Left cardiac atrium (tissue), 4 donors: ENCODE measurements at regions of chr17 and their contacts with region 1.

Region 1: DNA sequence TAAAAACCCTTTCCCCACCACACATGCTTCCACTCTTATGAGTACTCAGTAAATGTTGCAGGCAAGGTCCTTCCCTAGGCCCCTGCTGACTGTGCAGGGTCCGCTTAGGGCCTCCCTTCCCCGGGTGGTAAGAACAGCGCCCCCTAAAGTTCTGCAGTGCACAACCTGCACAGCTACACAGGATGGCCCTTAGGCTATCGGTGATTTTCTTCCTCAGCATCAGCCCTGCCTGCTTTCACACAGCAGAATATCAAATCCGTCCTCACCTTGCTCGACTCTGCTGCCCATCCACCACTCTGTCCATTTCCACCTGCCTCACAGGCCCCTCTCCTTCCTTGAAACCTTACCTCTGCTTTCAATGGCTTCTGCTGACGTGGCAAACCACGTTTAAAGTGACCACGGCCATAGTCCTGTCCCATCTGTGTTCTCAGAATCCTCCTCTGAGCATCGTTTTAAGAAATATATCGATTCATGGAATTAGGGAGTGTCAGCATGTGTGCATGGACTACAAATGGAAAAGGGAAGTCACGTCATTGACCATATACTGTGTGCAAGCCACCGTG is 51.4 kb upstream of the TMEM132E start:
- DNase-seq: no peak
- ATAC-seq: no peak

Region 2: GRCh38 chr17:34451313-34451712 is 76.7 kb before region 1 on chr17:
- intact Hi-C with region 1: loop called in 1 of 2 experiments (anchors 10 kb)
- DNase-seq: no peak
- ATAC-seq: no peak